ENCODE measurements at regions of chr6 and their contacts with region 1.

Region 1: GRCh38 chr6:166956444-166957086 is at the start of gene RNASET2:
- DNase-seq: peak; percentile 94 to 98
- H3K4me3 ChIP-seq: peak within 1 kb of the TSS; percentile 93
- H3K4me3 Mint-ChIP-seq: peak within 1 kb of the TSS; percentile 73
- H3K27ac Mint-ChIP-seq: peak within 1 kb of the TSS; percentile 53
- H3K4me1 ChIP-seq: peaks cover 22% of the 10 kb centered on the region
- H3K4me1 Mint-ChIP-seq: peaks cover 18% of the 10 kb centered on the region
- H3K27me3 ChIP-seq: no peaks in the 10 kb centered on the region
- H3K27me3 Mint-ChIP-seq: no peaks in the 10 kb centered on the region
- CTCF ChIP-seq: no peak
- total RNA-seq, gene RNASET2: 45.5 and 59.1 TPM in 2 replicates

Region 2: DNA sequence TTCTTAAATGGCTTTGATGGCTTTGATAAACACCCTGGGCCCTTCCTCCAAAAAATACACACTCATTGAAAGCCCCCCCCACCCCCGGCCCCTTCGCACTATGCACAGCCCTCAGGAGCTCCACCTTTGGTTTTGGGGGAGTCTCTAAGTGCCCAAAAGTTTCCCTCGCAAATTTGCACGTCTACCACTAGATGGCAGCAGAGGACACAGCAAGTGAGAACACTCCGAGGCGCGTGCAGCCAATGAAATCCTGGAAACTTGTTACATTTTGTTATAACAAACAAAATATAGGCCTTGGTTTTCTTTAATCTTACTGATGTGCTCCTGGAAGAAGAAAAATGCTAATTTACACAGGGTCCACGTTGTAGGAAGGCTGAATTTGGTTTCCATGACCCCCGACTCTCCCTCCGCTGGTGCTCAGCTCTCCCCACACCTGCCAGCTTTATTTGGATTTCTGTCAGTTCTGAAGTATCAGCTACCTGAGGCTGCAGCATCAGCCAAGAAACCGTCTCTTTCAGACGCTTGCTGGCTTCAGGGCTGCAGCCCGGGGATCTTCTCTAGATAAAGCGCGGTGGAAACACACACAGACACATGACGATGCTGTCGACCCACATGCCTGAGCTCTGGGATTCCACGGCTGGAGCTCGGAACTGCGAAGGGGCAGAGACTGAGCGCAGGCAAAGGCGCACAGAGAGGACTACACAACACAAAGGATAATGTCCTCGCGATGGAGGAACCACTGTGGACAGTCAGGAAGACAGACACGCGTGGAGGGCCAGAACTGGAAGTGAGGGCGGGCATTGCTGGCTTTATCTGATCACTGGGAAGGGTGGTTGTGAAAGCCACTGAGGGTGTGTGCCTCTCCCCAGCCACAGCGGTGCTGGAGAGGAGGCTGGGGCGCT is 181.1 kb before region 1 on chr6:
- CTCF ChIA-PET with region 1: interaction called, 14 read pairs
- POLR2A ChIA-PET with region 1: no interaction called
- intact Hi-C with region 1: loop called (anchors 1 kb)
- DNase-seq: peak in 1 of 2 experiments; percentile 63
- H3K4me3 ChIP-seq: no peak overlapping the region
- H3K4me3 Mint-ChIP-seq: peak overlapping the region; percentile 63
- H3K27ac Mint-ChIP-seq: no peak overlapping the region
- H3K4me1 ChIP-seq: no peaks in the 10 kb centered on the region
- H3K4me1 Mint-ChIP-seq: peaks cover 7% of the 10 kb centered on the region
- H3K27me3 ChIP-seq: no peaks in the 10 kb centered on the region
- H3K27me3 Mint-ChIP-seq: peaks cover 29% of the 10 kb centered on the region
- CTCF ChIP-seq: peak; percentile 84 to 89

Region 3: GRCh38 chr6:166786704-166787293 is 169.8 kb before region 1 on chr6:
- CTCF ChIA-PET with region 1: interaction called, 9 read pairs
- POLR2A ChIA-PET with region 1: no interaction called
- intact Hi-C with region 1: loop called (anchors 1 kb)
- DNase-seq: peak in 1 of 2 experiments; percentile 65
- H3K4me3 ChIP-seq: no peak overlapping the region
- H3K4me3 Mint-ChIP-seq: no peak overlapping the region
- H3K27ac Mint-ChIP-seq: no peak overlapping the region
- H3K4me1 ChIP-seq: no peaks in the 10 kb centered on the region
- H3K4me1 Mint-ChIP-seq: no peaks in the 10 kb centered on the region
- H3K27me3 ChIP-seq: no peaks in the 10 kb centered on the region
- H3K27me3 Mint-ChIP-seq: peaks cover 8% of the 10 kb centered on the region
- CTCF ChIP-seq: peak; percentile 59 to 67

Region 4: GRCh38 chr6:166862287-166862977 is 94.1 kb before region 1 on chr6:
- CTCF ChIA-PET with region 1: no interaction called
- POLR2A ChIA-PET with region 1: no interaction called
- intact Hi-C with region 1: loop called (anchors 5 kb)
- DNase-seq: peak; percentile 48 to 57
- H3K4me3 ChIP-seq: peak overlapping the region; percentile 40
- H3K4me3 Mint-ChIP-seq: peak overlapping the region; percentile 85
- H3K27ac Mint-ChIP-seq: no peak overlapping the region
- H3K4me1 ChIP-seq: no peaks in the 10 kb centered on the region
- H3K4me1 Mint-ChIP-seq: no peaks in the 10 kb centered on the region
- H3K27me3 ChIP-seq: no peaks in the 10 kb centered on the region
- H3K27me3 Mint-ChIP-seq: peaks cover 20% of the 10 kb centered on the region
- CTCF ChIP-seq: peak in 1 of 2 experiments; percentile 28

Region 5: GRCh38 chr6:166989427-166990032 is 33.0 kb after region 1 on chr6:
- CTCF ChIA-PET with region 1: no interaction called
- POLR2A ChIA-PET with region 1: no interaction called
- intact Hi-C with region 1: loop called (anchors 2 kb)
- DNase-seq: no peak
- H3K4me3 ChIP-seq: no peak overlapping the region
- H3K4me3 Mint-ChIP-seq: no peak overlapping the region
- H3K27ac Mint-ChIP-seq: no peak overlapping the region
- H3K4me1 ChIP-seq: no peaks in the 10 kb centered on the region
- H3K4me1 Mint-ChIP-seq: no peaks in the 10 kb centered on the region
- H3K27me3 ChIP-seq: no peaks in the 10 kb centered on the region
- H3K27me3 Mint-ChIP-seq: no peaks in the 10 kb centered on the region
- CTCF ChIP-seq: peak; percentile 24 to 47

Region 6: DNA sequence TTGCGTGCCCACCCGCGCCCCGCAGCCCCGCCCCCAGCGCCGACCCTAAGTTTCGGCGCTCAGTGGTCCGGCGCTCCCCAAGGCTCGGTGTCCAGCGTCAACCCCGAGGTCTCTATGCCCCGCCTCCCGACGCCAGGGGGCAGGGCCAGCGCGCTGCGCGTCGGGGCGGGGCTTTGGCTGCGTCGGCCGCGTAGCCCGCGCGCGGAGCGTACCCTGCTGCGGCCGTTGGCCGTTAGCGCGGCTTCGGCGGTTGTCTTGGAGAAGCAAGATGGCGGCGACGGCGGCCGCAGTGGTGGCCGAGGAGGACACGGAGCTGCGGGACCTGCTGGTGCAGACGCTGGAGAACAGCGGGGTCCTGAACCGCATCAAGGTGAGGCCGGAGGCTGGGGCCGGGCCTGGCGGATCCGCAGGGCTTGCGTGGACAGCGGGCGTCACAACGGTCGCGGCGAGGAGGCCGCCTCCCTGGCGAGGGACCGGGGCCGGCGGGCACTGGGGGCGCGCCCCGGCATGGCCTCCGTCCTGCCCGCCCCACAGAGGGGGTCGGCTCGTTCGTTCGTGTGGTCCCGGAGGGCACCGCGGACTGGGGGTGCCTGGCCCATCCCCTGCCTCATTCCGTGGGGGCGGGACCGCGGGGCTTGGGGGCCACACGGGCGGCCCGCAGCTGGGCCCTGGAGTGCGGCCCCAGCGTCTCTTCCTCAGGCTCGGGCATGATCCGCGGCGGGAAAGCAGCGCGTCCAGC is 42.7 kb after region 1 on chr6 and contains the start of gene CEP43:
- CTCF ChIA-PET with region 1: interaction called, 3 read pairs
- POLR2A ChIA-PET with region 1: no interaction called
- intact Hi-C with region 1: loop called (anchors 1 kb)
- DNase-seq: peak; percentile 92 to 95
- H3K4me3 ChIP-seq: peak within 1 kb of the TSS; percentile 67
- H3K4me3 Mint-ChIP-seq: peak within 1 kb of the TSS; percentile 84
- H3K27ac Mint-ChIP-seq: peak within 1 kb of the TSS; percentile 82
- H3K4me1 ChIP-seq: peaks cover 3% of the 10 kb centered on the region; the same call in 1 of the 2 replicates
- H3K4me1 Mint-ChIP-seq: peaks cover 14% of the 10 kb centered on the region
- H3K27me3 ChIP-seq: no peaks in the 10 kb centered on the region
- H3K27me3 Mint-ChIP-seq: no peaks in the 10 kb centered on the region
- CTCF ChIP-seq: no peak
- total RNA-seq, gene CEP43: 36.3 and 37.0 TPM in 2 replicates